ENCODE measurements at regions of chr12 and their contacts with region 1.

Region 1: DNA sequence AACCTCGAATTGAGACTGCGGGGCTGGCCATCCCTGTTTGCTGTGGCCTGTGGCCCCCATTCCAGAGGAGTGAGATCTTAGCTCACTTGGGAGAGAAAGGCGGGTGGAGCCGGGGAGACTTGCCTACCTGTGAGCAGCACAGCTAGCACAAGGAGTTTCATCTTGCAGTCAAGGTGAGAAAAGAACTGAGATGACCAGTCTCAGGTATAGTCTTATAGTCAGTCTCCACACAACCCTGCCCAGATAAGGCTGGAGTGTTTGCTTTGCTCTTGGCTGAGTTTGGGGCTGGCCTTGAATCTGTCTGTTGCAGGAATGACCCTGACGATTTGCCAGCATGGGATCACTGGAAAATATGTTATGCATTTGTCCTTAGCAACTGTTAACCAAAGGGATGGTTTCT is at the start of gene PLA2G1B:
- DNase-seq: no peak
- ATAC-seq: no peak
- H3K4me3 ChIP-seq: no peak within 1 kb of the TSS
- H3K27ac ChIP-seq: no peak within 1 kb of the TSS
- H3K4me1 ChIP-seq: no peaks in the 10 kb centered on the region
- H3K27me3 ChIP-seq: no peaks in the 10 kb centered on the region
- total RNA-seq, gene PLA2G1B: 0.91 to 1.2 TPM

Region 2: DNA sequence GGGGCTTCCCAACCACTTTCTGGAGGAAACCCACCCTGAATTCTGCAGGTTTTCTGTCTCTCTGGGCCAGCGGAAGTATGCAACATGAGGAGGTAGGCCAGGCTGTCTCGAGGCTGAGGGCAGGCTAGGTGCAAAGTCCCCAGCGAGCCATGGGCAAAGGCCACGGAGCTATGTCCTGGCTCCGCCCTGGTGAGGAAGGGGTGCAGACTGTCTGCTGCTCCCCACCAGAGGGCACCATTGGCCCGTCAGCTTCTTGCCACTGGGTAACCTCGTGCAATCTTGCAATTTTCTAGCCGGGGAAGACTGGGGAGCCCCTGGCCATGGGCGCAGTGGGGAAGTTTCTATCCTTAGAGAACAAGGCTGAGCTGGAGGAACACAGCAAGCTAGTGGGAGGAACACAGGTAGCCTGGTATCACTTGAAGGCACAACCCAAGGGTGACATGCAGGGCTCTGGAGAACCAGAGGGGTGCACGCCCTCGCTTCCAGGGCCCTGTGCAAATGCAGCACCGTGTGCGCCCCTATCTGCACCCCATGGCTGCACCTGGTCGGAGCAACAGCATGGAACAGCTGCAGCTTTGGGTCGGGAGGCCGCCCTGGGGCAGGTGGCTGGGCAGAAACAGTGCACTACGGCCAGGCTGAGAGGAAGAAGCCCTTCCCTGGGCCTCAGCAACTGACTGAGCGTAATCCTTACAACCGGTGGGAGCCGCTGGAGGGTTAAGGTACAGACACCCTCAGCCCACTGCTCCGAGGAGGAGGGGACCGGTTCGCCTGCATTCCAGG is 99.1 kb before region 1 on chr12:
- intact Hi-C with region 1: no loop called
- DNase-seq: peak; percentile 93 to 95
- ATAC-seq: peak; percentile 84
- H3K4me3 ChIP-seq: no peak overlapping the region
- H3K27ac ChIP-seq: no peak overlapping the region
- H3K4me1 ChIP-seq: no peaks in the 10 kb centered on the region
- H3K27me3 ChIP-seq: no peaks in the 10 kb centered on the region

Region 3: GRCh38 chr12:120352117-120352516 is 24.5 kb after region 1 on chr12:
- intact Hi-C with region 1: no loop called
- DNase-seq: no peak
- ATAC-seq: no peak
- H3K4me3 ChIP-seq: no peak overlapping the region
- H3K27ac ChIP-seq: no peak overlapping the region
- H3K4me1 ChIP-seq: no peaks in the 10 kb centered on the region
- H3K27me3 ChIP-seq: no peaks in the 10 kb centered on the region

Region 4: GRCh38 chr12:120367233-120367923 is 39.8 kb after region 1 on chr12:
- intact Hi-C with region 1: no loop called
- DNase-seq: no peak
- ATAC-seq: no peak
- H3K4me3 ChIP-seq: no peak overlapping the region
- H3K27ac ChIP-seq: no peak overlapping the region
- H3K4me1 ChIP-seq: no peaks in the 10 kb centered on the region
- H3K27me3 ChIP-seq: no peaks in the 10 kb centered on the region

Region 5: DNA sequence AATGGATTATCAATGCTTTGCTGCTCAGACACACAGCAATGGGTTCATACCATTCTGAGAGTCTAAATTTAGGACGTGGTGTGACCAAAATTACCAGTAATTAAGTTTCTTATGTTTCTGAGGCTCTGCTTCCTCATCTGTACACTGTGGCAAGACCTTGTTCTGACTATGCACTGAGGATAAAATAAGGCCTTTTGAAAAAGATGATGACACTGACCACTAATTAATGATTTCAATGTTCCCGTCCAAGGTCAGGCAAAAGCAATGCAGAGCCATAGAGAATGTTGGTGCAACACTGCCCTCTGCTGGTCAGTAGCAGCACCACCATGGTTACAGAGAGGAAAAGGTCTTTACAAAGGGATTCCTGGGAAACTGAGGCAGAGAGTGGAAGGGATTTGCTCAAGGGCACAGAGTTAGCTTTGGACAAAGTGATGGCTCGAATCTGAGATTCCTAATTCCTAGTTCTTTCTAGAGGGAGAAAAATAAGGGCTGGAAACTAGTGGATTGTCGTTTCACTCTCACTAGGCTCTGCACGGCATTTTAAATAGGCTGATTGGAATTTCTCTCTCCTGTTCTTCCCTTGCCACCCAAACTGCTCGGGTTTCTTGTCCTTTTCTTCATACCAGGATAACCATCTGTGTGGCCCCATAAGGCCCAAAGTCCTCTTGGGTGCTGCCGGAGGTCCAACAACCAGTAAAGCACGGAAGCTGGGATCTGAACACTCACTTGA is 782.8 kb after region 1 on chr12:
- intact Hi-C with region 1: loop called in 1 of 2 experiments (anchors 10 kb)
- DNase-seq: peak; percentile 57 to 79
- ATAC-seq: peak; percentile 84
- H3K4me3 ChIP-seq: no peak overlapping the region
- H3K27ac ChIP-seq: no peak overlapping the region
- H3K4me1 ChIP-seq: no peaks in the 10 kb centered on the region
- H3K27me3 ChIP-seq: no peaks in the 10 kb centered on the region

Measured in aorta (tissue), 5 donors.